Left cardiac atrium (tissue), 4 donors: ENCODE measurements at regions of chr11 and their contacts with region 1.

Region 1: GRCh38 chr11:45052361-45052760 is 94.1 kb upstream of the PRDM11 start:
- DNase-seq: no peak
- ATAC-seq: no peak

Region 2: GRCh38 chr11:45089676-45090499 is 37.5 kb after region 1 on chr11:
- intact Hi-C with region 1: loop called in 1 of 2 experiments (anchors 5 kb)
- DNase-seq: no peak
- ATAC-seq: peak in 1 of 2 donors; percentile 14